ENCODE measurements at regions of chr4 and their contacts with region 1.

Region 1: GRCh38 chr4:119080716-119081541 is 54.7 kb upstream of the MYOZ2 start:
- DNase-seq: no peak
- ATAC-seq: peak in 3 of 8 donors; percentile 23 to 56 (median 33)
- H3K4me3 ChIP-seq: no peak overlapping the region
- H3K27ac ChIP-seq: peak overlapping the region in 6 of 10 donors; percentile 10 to 70 (median 38)
- H3K4me1 ChIP-seq: peaks cover 0 to 16% (median 8%) of the 10 kb centered on the region in 9 donors
- H3K27me3 ChIP-seq: no peaks in the 10 kb centered on the region
- CTCF ChIP-seq: no peak

Region 2: DNA sequence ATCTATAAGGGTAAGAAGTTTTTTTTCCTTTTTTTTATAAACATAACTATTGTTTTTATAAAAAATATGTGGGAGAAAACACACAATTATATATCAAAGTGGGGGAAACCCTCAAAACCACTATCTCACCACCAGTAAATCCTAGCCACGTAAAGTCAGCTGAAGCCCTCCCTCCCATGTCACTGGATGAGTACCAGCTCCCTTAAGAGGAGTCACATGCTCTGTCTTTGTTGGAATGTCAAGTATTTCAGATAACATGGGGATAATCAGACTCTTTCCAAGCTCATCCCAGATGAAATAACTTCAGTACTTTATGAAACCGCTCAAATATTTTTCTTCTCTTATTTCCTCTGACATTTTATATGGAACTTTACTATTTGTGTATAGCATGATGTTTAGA is 57.1 kb after region 1 on chr4:
- intact Hi-C with region 1: loop called in 1 of 10 experiments (anchors 5 kb)
- DNase-seq: no peak
- ATAC-seq: peak in 6 of 8 donors; percentile 35 to 76 (median 70)
- H3K4me3 ChIP-seq: peak overlapping the region; percentile 11 to 60 (median 47)
- H3K27ac ChIP-seq: peak overlapping the region in 9 of 10 donors; percentile 75 to 93 (median 87)
- H3K4me1 ChIP-seq: peaks cover 0 to 29% (median 16%) of the 10 kb centered on the region in 9 donors
- H3K27me3 ChIP-seq: no peaks in the 10 kb centered on the region
- CTCF ChIP-seq: no peak

Region 3: DNA sequence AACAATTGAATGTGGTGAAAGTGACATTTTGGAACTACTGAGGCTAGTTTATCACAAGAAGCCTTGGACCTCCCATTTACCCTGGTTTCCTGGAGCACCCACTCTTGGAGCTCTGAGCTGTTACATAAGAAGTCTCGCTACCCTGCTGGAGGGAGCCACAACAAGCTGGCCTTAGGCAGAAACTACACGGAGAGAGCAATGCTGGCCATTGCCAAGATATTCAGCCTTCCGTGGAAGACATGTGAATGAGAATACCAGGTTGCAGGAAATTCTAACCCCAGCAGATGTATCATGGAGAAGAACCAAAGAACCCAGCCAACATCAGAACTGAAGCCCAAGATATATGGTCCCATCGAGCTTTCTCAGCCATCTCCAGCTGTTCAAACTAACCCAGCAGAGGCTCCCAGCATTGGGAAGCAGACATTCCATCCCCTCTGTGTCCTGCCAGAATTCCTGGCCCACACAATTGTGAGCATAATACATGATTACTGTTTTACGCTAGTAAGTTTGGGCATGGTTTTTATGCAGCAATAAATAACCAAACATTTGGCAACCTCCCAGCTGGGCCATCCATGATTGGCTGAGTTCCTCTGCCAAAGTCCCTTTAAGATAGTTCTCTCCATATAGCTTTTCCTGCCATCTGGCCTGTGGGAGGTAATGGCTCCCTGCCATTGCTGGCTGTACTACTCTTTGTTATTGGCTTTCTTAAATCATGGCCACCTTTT is 565.6 kb after region 1 on chr4:
- intact Hi-C with region 1: no loop called
- DNase-seq: peak in 1 of 2 donors; percentile 49
- ATAC-seq: peak; percentile 55 to 94 (median 88)
- H3K4me3 ChIP-seq: no peak overlapping the region
- H3K27ac ChIP-seq: peak overlapping the region in 7 of 10 donors; percentile 4 to 65 (median 49)
- H3K4me1 ChIP-seq: peaks cover 0 to 12% (median 0%) of the 10 kb centered on the region in 9 donors
- H3K27me3 ChIP-seq: no peaks in the 10 kb centered on the region
- CTCF ChIP-seq: no peak

Measured in heart right ventricle (tissue), 16 donors.